Posterior cingulate gyrus (tissue), 11 donors: ENCODE measurements at regions of chr3 and their contacts with region 1.

Region 1: DNA sequence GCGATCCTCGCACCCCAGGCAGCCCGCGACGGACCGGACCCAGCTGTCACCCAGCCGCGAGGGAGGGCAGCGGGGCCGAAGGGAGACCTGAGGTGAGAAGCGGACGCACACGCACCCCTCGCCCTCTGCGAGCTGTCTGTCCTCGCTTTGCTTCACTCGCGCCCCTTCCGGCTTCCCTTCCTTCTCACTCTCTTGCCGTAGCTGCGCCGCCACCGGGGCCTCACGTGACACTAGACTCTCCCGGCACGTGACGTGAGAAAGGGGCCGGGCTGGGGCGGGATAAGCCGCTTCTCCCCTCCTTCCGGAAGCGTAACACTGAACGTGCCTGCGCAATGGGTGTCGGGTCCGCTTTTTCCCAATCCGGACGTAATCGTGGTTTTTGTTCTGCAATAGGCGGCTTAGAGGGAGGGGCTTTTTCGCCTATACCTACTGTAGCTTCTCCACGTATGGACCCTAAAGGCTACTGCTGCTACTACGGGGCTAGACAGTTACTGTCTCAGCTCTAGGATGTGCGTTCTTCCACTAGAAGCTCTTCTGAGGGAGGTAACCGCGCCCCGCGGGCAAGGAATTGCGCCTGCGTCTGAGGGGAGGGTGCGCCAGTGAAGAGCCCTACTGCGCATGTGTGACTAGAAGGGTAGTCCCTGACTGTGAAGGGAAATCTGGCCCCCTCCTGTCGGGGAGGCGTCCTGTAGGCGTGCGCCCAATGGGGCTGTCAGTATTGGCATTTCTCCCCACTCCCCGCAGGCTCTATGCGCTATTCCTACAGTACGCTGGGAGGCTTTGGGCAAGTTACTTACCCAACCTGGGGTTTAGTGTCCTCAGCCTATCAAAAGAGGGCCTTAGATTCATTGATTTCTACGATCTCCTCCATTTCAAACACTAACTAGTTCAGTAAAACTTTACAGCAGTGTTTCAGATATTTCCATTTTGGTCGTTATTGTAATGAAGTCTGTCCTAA is at the starts of genes ATG3 and SLC35A5:
- DNase-seq: peak; percentile 96 to 99 (median 99)

Region 2: DNA sequence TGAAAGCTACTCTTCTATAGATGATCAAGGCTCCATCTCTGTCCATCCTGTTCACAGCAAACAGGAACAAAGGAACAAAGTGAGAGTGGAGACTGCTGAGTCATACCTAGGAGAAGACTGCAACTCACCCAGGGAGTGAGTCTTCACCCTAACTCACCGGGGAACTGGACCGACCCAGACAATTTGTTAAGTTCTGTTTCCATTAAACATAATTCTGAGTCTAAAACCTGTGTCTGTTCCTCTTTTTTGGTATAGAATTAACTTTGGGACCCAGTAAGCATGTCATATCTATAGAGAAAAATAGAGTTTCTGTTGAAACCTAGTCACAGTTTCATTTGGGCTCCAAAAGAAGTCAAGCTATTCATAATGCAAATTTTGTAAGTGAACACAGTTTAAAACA is 57.3 kb after region 1 on chr3:
- intact Hi-C with region 1: no loop called
- DNase-seq: no peak

Region 3: GRCh38 chr3:112984485-112984884 is 422.5 kb after region 1 on chr3:
- intact Hi-C with region 1: loop called (anchors 10 kb)
- DNase-seq: no peak